Naive thymus-derived CD4-positive, alpha-beta T cell (primary cell): ENCODE measurements at regions of chr13 and their contacts with region 1.

Region 1: GRCh38 chr13:25886438-25887214 is 165.2 kb downstream of the SHISA2 start:
- DNase-seq: peak in 1 of 9 donors; percentile 49
- ATAC-seq: no peak
- H3K4me3 ChIP-seq: no peak overlapping the region
- H3K4me3 Mint-ChIP-seq: peak overlapping the region in 1 of 10 donors; percentile 12
- H3K27ac ChIP-seq: no peak overlapping the region
- H3K27ac Mint-ChIP-seq: peak overlapping the region in 7 of 9 donors; percentile 1 to 86 (median 68)
- H3K4me1 ChIP-seq: peaks cover 0 to 36% of the 10 kb centered on the region in 2 donors
- H3K4me1 Mint-ChIP-seq: peaks cover 27 to 83% (median 63%) of the 10 kb centered on the region in 7 donors
- H3K27me3 ChIP-seq: no peaks in the 10 kb centered on the region
- H3K27me3 Mint-ChIP-seq: no peaks in the 10 kb centered on the region

Region 2: GRCh38 chr13:25847145-25847544 is 39.5 kb before region 1 on chr13:
- CTCF ChIA-PET with region 1: interaction called, 3 read pairs
- POLR2A ChIA-PET with region 1: interaction called, 3 read pairs
- intact Hi-C with region 1: loop called in 1 of 2 experiments (anchors 1 kb)
- DNase-seq: peak in 7 of 9 donors; percentile 17 to 65 (median 47)
- ATAC-seq: peak; percentile 75
- H3K4me3 ChIP-seq: peak overlapping the region; percentile 38
- H3K4me3 Mint-ChIP-seq: peak overlapping the region; percentile 26 to 75 (median 66)
- H3K27ac ChIP-seq: peak overlapping the region; percentile 39
- H3K27ac Mint-ChIP-seq: peak overlapping the region; percentile 6 to 91 (median 72)
- H3K4me1 ChIP-seq: peaks cover 13 to 23% of the 10 kb centered on the region in 2 donors
- H3K4me1 Mint-ChIP-seq: peaks cover 21 to 48% (median 38%) of the 10 kb centered on the region in 7 donors
- H3K27me3 ChIP-seq: no peaks in the 10 kb centered on the region
- H3K27me3 Mint-ChIP-seq: peaks cover 0 to 3% (median 0%) of the 10 kb centered on the region in 5 donors

Region 3: DNA sequence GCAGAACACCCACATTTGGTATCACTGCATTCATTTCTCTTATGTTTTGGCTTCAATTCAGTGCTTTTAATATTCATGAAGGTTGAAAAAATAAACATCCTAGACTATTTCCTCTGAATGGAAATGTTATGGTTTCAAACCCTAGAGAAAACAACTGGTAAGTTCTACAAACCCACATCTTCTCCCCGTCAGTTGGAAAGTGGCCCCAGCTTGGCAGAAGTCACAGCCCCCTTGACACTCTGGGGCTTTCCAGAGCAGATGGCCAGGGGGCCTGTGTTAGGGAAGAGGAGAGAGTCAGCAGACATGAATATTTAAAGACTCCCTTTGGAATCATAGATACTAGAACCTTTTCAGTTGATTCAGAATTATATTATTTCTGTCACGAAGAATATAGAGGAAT is 41.3 kb after region 1 on chr13:
- CTCF ChIA-PET with region 1: no interaction called
- POLR2A ChIA-PET with region 1: no interaction called
- intact Hi-C with region 1: no loop called
- DNase-seq: no peak
- ATAC-seq: no peak
- H3K4me3 ChIP-seq: no peak overlapping the region
- H3K4me3 Mint-ChIP-seq: no peak overlapping the region
- H3K27ac ChIP-seq: no peak overlapping the region
- H3K27ac Mint-ChIP-seq: no peak overlapping the region
- H3K4me1 ChIP-seq: no peaks in the 10 kb centered on the region
- H3K4me1 Mint-ChIP-seq: peaks cover 0 to 3% (median 0%) of the 10 kb centered on the region in 7 donors
- H3K27me3 ChIP-seq: no peaks in the 10 kb centered on the region
- H3K27me3 Mint-ChIP-seq: peaks cover 0 to 3% (median 0%) of the 10 kb centered on the region in 5 donors